Prostate gland (tissue), 2 donors: ENCODE measurements at regions of chr1 and their contacts with region 1.

Region 1: DNA sequence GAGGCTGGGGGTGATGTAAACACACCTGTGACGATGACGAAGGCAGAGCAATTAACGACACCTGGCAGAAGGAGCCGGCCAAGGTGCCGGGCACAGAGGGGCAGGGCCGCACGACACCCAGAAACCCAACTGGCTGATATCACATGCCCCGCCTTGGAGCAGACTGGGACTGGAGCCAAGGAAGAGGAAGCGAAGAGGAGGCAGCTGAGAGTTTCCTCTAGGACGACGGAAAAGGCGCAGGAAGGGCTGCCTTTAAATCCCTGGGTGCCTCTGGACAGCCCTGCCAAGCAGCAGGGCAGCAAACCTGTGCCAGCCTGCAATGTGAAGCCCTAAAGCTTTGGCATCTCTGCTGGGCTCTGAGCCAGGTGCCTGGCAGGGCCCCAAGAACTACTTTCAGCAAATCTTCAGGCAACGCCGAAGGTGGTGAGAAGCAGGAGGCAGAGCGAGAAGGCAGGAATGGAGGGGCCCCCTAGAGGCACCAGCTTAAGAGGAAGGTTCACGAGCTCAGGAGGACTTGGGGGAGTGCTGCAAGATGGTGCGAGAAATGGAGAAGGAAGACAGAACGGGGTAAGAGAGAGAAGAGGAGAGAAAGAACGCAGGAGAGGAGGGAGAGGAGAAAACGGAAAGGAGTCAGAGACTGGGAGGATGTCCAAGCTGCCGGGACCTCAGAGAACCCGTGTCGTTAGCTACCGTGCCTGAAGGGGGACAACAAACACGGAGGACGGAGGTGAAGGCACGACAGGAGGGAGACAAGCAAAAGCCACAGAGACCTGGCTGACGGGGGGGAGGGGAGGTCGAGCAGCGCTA is 25.3 kb upstream of the PEF1 start:
- DNase-seq: peak; percentile 91
- H3K4me3 ChIP-seq: peak overlapping the region; percentile 4 to 15
- H3K27ac ChIP-seq: peak overlapping the region; percentile 62 to 72
- H3K4me1 ChIP-seq: peaks cover 2% of the 10 kb centered on the region
- H3K27me3 ChIP-seq: no peaks in the 10 kb centered on the region
- CTCF ChIP-seq: no peak
- POLR2A ChIP-seq: peak; percentile 41

Region 2: GRCh38 chr1:32072622-32073298 is 402.8 kb after region 1 on chr1 and contains the start of gene TMEM39B:
- intact Hi-C with region 1: loop called (anchors 5 kb)
- DNase-seq: peak; percentile 94
- H3K4me3 ChIP-seq: peak within 1 kb of the TSS; percentile 73 to 86
- H3K27ac ChIP-seq: peak within 1 kb of the TSS; percentile 94 to 97
- H3K4me1 ChIP-seq: peaks cover 4% of the 10 kb centered on the region
- H3K27me3 ChIP-seq: no peaks in the 10 kb centered on the region
- CTCF ChIP-seq: peak in 2 of 4 experiments; percentile 22 to 34
- POLR2A ChIP-seq: peak; percentile 65
- total RNA-seq, gene TMEM39B: 8.2 to 15.4 TPM